Activated CD4-positive, alpha-beta T cell treated with anti-CD3 and anti-CD28 coated beads for 36 hours (primary cell): ENCODE measurements at regions of chr19 and their contacts with region 1.

Region 1: GRCh38 chr19:11090054-11090900 is 1.0 kb downstream of the LDLR start:
- DNase-seq: peak; percentile 99
- ATAC-seq: peak; percentile 88
- H3K4me3 Mint-ChIP-seq: peak overlapping the region; percentile 93
- H3K27ac Mint-ChIP-seq: peak overlapping the region; percentile 97
- H3K4me1 Mint-ChIP-seq: peaks cover 51% of the 10 kb centered on the region
- H3K27me3 Mint-ChIP-seq: no peaks in the 10 kb centered on the region

Region 2: GRCh38 chr19:10928525-10929401 is 161.5 kb before region 1 on chr19 and contains the starts of genes TIMM29 and YIPF2:
- CTCF ChIA-PET with region 1: no interaction called
- POLR2A ChIA-PET with region 1: no interaction called
- intact Hi-C with region 1: loop called in 1 of 2 experiments (anchors 2 kb)
- DNase-seq: peak; percentile 97
- ATAC-seq: peak; percentile 96
- H3K4me3 Mint-ChIP-seq: peak within 1 kb of the TSS; percentile 90
- H3K27ac Mint-ChIP-seq: peak within 1 kb of the TSS; percentile 79
- H3K4me1 Mint-ChIP-seq: peaks cover 21% of the 10 kb centered on the region
- H3K27me3 Mint-ChIP-seq: no peaks in the 10 kb centered on the region
- total RNA-seq, gene TIMM29: 8.6 to 15.5 TPM
- total RNA-seq, gene YIPF2: 15.8 to 21.3 TPM

Region 3: DNA sequence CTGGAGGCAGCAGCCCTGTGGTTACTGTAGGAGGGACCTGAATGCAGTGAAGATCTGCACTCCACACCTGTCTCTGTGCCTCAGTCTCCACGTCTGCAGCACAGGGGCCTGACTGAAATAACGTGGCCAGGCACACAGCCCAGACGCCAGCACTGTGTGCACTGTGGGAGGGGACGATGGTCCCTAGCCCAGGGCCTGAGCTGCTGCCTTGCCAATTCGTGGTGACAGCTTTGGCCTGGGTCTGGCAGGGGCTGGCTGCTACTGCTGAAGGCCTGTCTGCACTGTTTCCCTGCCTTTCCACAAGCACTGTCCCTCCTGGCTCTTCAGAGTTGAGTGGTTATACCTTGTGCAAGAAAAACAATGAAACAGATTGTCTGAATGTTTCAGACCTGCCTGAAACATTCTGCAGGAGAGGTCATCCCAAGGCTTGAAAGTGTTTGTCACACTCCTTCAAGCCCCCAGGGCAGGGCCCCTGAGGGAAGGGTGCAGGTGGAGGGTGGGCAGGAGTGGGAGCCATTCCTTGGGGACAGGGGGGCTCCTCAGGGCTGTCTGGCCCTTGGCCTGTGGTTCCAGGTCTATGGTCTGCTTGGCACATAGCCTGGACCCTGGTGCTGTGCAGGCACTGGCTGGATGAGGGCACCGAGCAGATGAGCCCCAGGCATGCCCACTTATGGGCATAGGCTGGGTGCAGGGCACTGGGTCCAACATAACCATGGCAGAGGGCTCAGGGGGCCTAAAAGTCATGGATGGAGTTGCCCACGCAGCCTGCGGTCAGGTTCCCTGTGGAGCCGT is 39.8 kb before region 1 on chr19:
- CTCF ChIA-PET with region 1: no interaction called
- POLR2A ChIA-PET with region 1: no interaction called
- intact Hi-C with region 1: no loop called
- DNase-seq: no peak
- ATAC-seq: no peak
- H3K4me3 Mint-ChIP-seq: no peak overlapping the region
- H3K27ac Mint-ChIP-seq: no peak overlapping the region
- H3K4me1 Mint-ChIP-seq: peaks cover 34% of the 10 kb centered on the region
- H3K27me3 Mint-ChIP-seq: no peaks in the 10 kb centered on the region

Region 4: DNA sequence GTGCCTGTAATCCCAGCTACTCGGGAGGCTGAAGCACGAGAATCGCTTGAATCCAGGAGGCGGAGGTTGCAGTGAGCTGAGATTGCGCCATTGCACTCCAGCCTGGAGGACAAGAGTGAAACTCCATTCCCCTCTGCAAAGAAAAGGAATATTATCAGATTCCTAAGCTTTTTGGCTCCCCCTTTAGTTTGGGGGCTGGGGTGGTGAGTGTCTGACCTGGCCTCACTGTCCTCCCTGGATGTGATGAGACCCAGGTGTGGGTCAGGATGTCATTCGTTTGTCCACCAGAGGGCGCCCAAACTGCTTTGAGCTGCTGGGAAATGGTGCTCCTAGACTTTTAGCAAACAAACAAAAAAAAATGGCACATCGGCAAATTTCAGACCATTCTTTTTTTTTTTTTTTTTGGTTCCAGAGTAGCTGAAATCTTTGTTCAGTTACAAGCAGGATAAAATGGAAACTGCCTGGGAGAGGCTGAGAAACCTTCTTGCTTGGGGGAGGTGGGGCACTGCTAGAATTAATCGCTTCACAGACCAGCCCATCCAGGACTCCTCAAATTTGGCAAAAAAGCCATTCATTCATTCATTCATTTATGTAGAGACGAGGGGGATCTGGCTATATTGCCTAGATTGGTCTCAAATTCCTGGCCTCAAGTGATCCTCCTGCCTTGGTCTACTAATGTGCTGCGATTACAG is 35.9 kb after region 1 on chr19:
- CTCF ChIA-PET with region 1: interaction called, 6 read pairs
- POLR2A ChIA-PET with region 1: interaction called, 3 read pairs
- intact Hi-C with region 1: loop called in 1 of 2 experiments (anchors 2 kb)
- DNase-seq: peak; percentile 88
- ATAC-seq: peak; percentile 78
- H3K4me3 Mint-ChIP-seq: no peak overlapping the region
- H3K27ac Mint-ChIP-seq: no peak overlapping the region
- H3K4me1 Mint-ChIP-seq: no peaks in the 10 kb centered on the region
- H3K27me3 Mint-ChIP-seq: no peaks in the 10 kb centered on the region

Region 5: DNA sequence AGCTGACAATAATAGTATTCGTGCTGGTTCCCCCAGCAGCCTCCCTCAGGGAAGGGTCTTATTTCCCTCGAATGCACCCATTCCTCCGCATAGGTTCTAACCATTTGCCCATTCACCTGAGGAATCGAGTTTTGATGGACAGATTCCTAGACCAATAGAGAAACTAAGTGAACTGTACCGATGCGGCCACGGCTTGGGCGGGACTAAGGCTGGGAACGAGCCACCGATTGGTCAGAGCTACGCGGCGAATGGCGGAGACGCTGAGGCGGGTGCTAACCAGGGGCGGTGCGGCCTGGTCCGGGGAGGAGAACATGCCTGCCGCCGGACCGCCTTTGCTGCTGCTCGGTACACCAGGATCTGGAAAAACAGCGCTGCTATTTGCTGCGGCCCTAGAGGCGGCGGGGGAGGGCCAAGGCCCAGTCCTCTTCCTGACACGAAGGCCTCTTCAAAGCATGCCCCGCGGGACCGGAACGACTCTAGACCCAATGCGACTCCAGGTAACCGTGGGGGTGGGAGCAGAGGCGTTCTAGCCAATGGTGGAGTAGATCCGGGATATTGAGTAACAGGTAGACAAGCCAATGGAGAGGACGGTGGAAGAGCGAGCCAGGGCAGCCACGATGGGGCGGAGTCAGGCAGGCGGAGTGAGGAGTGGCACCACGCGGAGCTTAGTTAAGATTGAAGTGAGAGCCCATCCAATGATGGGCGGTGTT is 284.3 kb after region 1 on chr19 and contains the start of gene SWSAP1:
- CTCF ChIA-PET with region 1: interaction called, 3 read pairs
- POLR2A ChIA-PET with region 1: interaction called, 6 read pairs
- intact Hi-C with region 1: loop called in 1 of 2 experiments (anchors 1 kb)
- DNase-seq: peak; percentile 98
- ATAC-seq: peak; percentile 92
- H3K4me3 Mint-ChIP-seq: no peak within 1 kb of the TSS
- H3K27ac Mint-ChIP-seq: no peak within 1 kb of the TSS
- H3K4me1 Mint-ChIP-seq: peaks cover 28% of the 10 kb centered on the region
- H3K27me3 Mint-ChIP-seq: no peaks in the 10 kb centered on the region
- total RNA-seq, gene SWSAP1: 1.5 to 1.7 TPM

Region 6: GRCh38 chr19:11633223-11633622 is 542.9 kb after region 1 on chr19:
- CTCF ChIA-PET with region 1: no interaction called
- POLR2A ChIA-PET with region 1: no interaction called
- intact Hi-C with region 1: no loop called
- DNase-seq: no peak
- ATAC-seq: no peak
- H3K4me3 Mint-ChIP-seq: no peak overlapping the region
- H3K27ac Mint-ChIP-seq: no peak overlapping the region
- H3K4me1 Mint-ChIP-seq: no peaks in the 10 kb centered on the region
- H3K27me3 Mint-ChIP-seq: peaks cover 2% of the 10 kb centered on the region